ENCODE measurements at regions of chr19 and their contacts with region 1.

Region 1: DNA sequence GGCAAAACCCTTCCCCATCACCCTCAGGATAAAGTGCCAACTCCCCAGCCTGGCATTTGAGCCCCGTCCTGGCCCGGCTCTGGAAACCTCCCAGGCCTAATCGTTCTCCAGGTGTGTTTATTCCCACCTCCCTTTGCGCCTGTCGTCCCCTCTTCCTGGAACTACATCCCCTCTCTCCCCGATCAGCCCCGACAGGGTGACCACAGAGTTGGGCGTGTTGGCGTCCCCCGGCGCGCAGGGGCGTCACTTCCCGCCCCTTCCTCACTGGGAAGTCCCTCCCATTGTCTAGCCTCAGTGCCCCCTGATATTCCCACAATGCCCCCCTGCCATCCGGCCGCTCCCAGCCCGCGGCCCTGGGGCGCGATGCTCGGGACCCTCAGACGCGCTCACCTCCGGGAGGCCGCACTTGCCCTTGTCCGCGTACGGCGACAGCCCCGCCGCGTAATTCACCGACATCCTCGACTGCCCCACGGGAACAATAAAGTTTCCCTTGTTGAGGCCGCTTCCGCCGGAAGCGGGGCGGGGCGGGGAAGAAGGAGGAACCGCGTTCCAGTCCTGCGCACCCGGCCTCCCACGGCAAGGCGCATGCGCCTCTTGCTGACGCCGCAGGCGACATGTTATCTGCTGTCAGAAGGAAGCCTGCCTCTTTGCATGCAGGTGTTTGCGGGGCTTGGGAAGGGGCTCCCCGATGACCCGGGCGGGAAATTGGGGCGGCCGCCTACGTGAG is at the starts of genes ANKRD24 and SIRT6:
- DNase-seq: peak; percentile 97 to 98
- ATAC-seq: peak; percentile 90 to 97 (median 94)
- H3K4me3 ChIP-seq: peak within 1 kb of the TSS; percentile 90
- H3K27ac ChIP-seq: peak within 1 kb of the TSS; percentile 87
- H3K4me1 ChIP-seq: peaks cover 27% of the 10 kb centered on the region
- H3K27me3 ChIP-seq: no peaks in the 10 kb centered on the region
- CTCF ChIP-seq: no peak
- total RNA-seq, gene ANKRD24: 0.36 to 2.7 (median 0.84) TPM
- total RNA-seq, gene SIRT6: 8.4 to 13.1 (median 11.4) TPM

Region 2: GRCh38 chr19:4123615-4124568 is 58.4 kb before region 1 on chr19 and contains the start of gene MAP2K2:
- intact Hi-C with region 1: loop called in 1 of 2 experiments (anchors 5 kb)
- DNase-seq: peak; percentile 96 to 98
- ATAC-seq: peak; percentile 97 to 100 (median 98)
- H3K4me3 ChIP-seq: peak within 1 kb of the TSS; percentile 67
- H3K27ac ChIP-seq: peak within 1 kb of the TSS; percentile 81
- H3K4me1 ChIP-seq: peaks cover 11% of the 10 kb centered on the region
- H3K27me3 ChIP-seq: no peaks in the 10 kb centered on the region
- CTCF ChIP-seq: no peak
- total RNA-seq, gene MAP2K2: 136 to 192 (median 151) TPM

Measured in psoas muscle (tissue), 8 donors.